B cell (primary cell): ENCODE measurements at regions of chr1 and their contacts with region 1.

Region 1: GRCh38 chr1:234722904-234723720 is 113.1 kb upstream of the IRF2BP2 start:
- DNase-seq: peak; percentile 62
- ATAC-seq: no peak
- H3K4me3 ChIP-seq: no peak overlapping the region
- H3K4me3 Mint-ChIP-seq: peak overlapping the region; percentile 70
- H3K27ac ChIP-seq: peak overlapping the region in 1 of 2 donors; percentile 17
- H3K27ac Mint-ChIP-seq: peak overlapping the region; percentile 70
- H3K4me1 ChIP-seq: peaks cover 35 to 50% of the 10 kb centered on the region in 2 donors
- H3K4me1 Mint-ChIP-seq: peaks cover 47% of the 10 kb centered on the region
- H3K27me3 ChIP-seq: no peaks in the 10 kb centered on the region
- H3K27me3 Mint-ChIP-seq: no peaks in the 10 kb centered on the region
- CTCF ChIP-seq: no peak

Region 2: GRCh38 chr1:234925440-234926263 is 202.5 kb after region 1 on chr1:
- CTCF ChIA-PET with region 1: no interaction called
- POLR2A ChIA-PET with region 1: no interaction called
- intact Hi-C with region 1: loop called (anchors 5 kb)
- DNase-seq: no peak
- ATAC-seq: no peak
- H3K4me3 ChIP-seq: no peak overlapping the region
- H3K4me3 Mint-ChIP-seq: peak overlapping the region; percentile 81
- H3K27ac ChIP-seq: no peak overlapping the region
- H3K27ac Mint-ChIP-seq: peak overlapping the region; percentile 88
- H3K4me1 ChIP-seq: peaks cover 28 to 41% of the 10 kb centered on the region in 2 donors
- H3K4me1 Mint-ChIP-seq: peaks cover 31% of the 10 kb centered on the region
- H3K27me3 ChIP-seq: no peaks in the 10 kb centered on the region
- H3K27me3 Mint-ChIP-seq: no peaks in the 10 kb centered on the region
- CTCF ChIP-seq: no peak